Colonic mucosa (tissue), 4 donors: ENCODE measurements at regions of chr9 and their contacts with region 1.

Region 1: GRCh38 chr9:111037381-111038305 is 627 bp downstream of the LPAR1 start:
- DNase-seq: peak; percentile 51
- H3K4me3 ChIP-seq: peak overlapping the region; percentile 71
- H3K27ac ChIP-seq: peak overlapping the region; percentile 85
- H3K4me1 ChIP-seq: no peaks in the 10 kb centered on the region
- H3K27me3 ChIP-seq: no peaks in the 10 kb centered on the region
- CTCF ChIP-seq: no peak

Region 2: GRCh38 chr9:110638381-110638954 is 399.2 kb before region 1 on chr9:
- intact Hi-C with region 1: loop called (anchors 10 kb)
- DNase-seq: no peak
- H3K4me3 ChIP-seq: no peak overlapping the region
- H3K27ac ChIP-seq: no peak overlapping the region
- H3K4me1 ChIP-seq: no peaks in the 10 kb centered on the region
- H3K27me3 ChIP-seq: no peaks in the 10 kb centered on the region
- CTCF ChIP-seq: peak; percentile 22

Region 3: GRCh38 chr9:110767559-110768063 is 270.0 kb before region 1 on chr9:
- intact Hi-C with region 1: no loop called
- DNase-seq: no peak
- H3K4me3 ChIP-seq: no peak overlapping the region
- H3K27ac ChIP-seq: no peak overlapping the region
- H3K4me1 ChIP-seq: no peaks in the 10 kb centered on the region
- H3K27me3 ChIP-seq: no peaks in the 10 kb centered on the region
- CTCF ChIP-seq: no peak

Region 4: DNA sequence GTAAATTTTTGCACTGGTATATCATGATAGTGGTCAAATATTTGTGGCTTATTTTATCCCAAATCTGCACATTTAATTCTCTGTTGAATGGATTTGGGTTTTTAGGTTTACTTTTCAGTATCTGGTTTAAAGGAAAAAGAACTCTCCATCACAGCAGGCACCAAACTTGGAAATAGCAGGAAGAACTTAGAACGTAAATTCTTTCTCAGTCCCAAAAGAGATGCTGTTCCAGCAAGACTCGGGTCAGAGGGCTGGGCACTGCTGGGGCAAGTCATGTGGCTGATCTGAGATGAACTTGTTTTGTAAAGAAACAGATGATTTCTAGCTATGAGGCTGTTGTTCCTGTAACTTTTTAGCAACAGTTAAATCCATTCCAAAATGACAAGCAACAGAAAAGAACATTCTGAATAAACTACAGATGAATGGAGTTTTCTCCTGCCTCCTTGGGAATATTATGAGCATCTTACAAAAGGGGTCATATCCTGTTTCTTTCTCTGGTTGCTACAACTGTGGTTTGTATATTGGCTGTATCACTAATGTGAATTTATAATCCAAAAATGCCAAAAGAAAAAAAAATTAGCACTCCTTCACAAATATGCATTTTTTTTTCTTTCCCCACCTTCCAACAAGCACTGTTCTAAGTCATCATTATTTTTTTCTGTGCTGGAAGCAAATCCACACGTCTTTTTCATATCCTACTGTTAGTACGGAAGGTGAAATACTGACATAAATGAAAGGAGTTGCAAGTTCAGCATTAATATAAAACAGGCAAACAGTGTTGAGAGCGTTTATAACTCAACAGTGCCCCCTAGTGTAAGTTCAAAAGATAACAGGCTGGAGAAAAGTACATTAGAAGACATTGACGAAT is 261.3 kb after region 1 on chr9:
- intact Hi-C with region 1: loop called (anchors 10 kb)
- DNase-seq: no peak
- H3K4me3 ChIP-seq: no peak overlapping the region
- H3K27ac ChIP-seq: no peak overlapping the region
- H3K4me1 ChIP-seq: no peaks in the 10 kb centered on the region
- H3K27me3 ChIP-seq: no peaks in the 10 kb centered on the region
- CTCF ChIP-seq: peak; percentile 72